Activated B cell treated with CpG ODN at 0.5 μM for 24 hours (primary cell): ENCODE measurements at regions of chr14 and their contacts with region 1.

Region 1: DNA sequence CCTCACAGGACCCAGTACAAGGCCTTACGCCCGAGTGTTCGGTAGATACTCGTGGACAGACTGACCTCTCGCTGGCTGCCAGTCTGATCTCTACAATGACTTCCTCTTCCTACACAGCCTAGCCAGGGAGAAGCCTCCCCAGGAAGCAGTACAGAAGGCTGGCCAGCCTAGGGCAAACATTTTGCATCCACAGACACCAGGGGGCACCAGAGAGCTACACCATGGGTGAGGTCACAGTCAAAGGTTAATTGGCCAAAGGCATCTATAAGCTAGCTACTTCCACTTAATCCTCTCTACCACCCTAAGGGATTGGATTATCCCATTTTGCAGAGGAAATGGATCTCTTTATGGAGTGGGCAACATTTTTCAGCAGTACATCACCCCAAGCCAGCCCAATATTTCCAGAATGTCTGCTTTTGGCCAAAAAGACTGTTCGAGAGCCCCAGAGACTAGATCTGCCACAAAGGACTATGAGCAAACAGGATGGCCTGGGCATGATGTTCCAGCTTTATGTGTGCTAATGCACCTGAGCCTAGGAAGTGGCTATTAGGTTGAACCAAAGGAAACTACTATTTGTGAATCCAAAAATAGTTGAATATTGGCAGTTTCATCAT is 14.6 kb upstream of the PNMA1 start:
- DNase-seq: peak; percentile 77
- ATAC-seq: peak; percentile 93
- H3K4me3 Mint-ChIP-seq: no peak overlapping the region
- H3K27ac Mint-ChIP-seq: peak overlapping the region; percentile 70
- H3K4me1 Mint-ChIP-seq: peaks cover 10% of the 10 kb centered on the region
- H3K27me3 Mint-ChIP-seq: no peaks in the 10 kb centered on the region
- CTCF ChIP-seq: peak; percentile 75

Region 2: GRCh38 chr14:73248108-73248868 is 480.5 kb before region 1 on chr14:
- CTCF ChIA-PET with region 1: no interaction called
- POLR2A ChIA-PET with region 1: no interaction called
- intact Hi-C with region 1: no loop called
- DNase-seq: no peak
- ATAC-seq: peak; percentile 41
- H3K4me3 Mint-ChIP-seq: peak overlapping the region; percentile 58
- H3K27ac Mint-ChIP-seq: peak overlapping the region; percentile 43
- H3K4me1 Mint-ChIP-seq: peaks cover 42% of the 10 kb centered on the region
- H3K27me3 Mint-ChIP-seq: peaks cover 1% of the 10 kb centered on the region
- CTCF ChIP-seq: no peak

Region 3: GRCh38 chr14:73386342-73386741 is 342.5 kb before region 1 on chr14:
- CTCF ChIA-PET with region 1: no interaction called
- POLR2A ChIA-PET with region 1: no interaction called
- intact Hi-C with region 1: no loop called
- DNase-seq: no peak
- ATAC-seq: no peak
- H3K4me3 Mint-ChIP-seq: no peak overlapping the region
- H3K27ac Mint-ChIP-seq: no peak overlapping the region
- H3K4me1 Mint-ChIP-seq: peaks cover 47% of the 10 kb centered on the region
- H3K27me3 Mint-ChIP-seq: no peaks in the 10 kb centered on the region
- CTCF ChIP-seq: no peak

Region 4: GRCh38 chr14:73696466-73697400 is 32.1 kb before region 1 on chr14:
- CTCF ChIA-PET with region 1: no interaction called
- POLR2A ChIA-PET with region 1: no interaction called
- intact Hi-C with region 1: no loop called
- DNase-seq: no peak
- ATAC-seq: peak; percentile 73
- H3K4me3 Mint-ChIP-seq: peak overlapping the region; percentile 6
- H3K27ac Mint-ChIP-seq: peak overlapping the region; percentile 78
- H3K4me1 Mint-ChIP-seq: peaks cover 11% of the 10 kb centered on the region
- H3K27me3 Mint-ChIP-seq: no peaks in the 10 kb centered on the region
- CTCF ChIP-seq: no peak

Region 5: DNA sequence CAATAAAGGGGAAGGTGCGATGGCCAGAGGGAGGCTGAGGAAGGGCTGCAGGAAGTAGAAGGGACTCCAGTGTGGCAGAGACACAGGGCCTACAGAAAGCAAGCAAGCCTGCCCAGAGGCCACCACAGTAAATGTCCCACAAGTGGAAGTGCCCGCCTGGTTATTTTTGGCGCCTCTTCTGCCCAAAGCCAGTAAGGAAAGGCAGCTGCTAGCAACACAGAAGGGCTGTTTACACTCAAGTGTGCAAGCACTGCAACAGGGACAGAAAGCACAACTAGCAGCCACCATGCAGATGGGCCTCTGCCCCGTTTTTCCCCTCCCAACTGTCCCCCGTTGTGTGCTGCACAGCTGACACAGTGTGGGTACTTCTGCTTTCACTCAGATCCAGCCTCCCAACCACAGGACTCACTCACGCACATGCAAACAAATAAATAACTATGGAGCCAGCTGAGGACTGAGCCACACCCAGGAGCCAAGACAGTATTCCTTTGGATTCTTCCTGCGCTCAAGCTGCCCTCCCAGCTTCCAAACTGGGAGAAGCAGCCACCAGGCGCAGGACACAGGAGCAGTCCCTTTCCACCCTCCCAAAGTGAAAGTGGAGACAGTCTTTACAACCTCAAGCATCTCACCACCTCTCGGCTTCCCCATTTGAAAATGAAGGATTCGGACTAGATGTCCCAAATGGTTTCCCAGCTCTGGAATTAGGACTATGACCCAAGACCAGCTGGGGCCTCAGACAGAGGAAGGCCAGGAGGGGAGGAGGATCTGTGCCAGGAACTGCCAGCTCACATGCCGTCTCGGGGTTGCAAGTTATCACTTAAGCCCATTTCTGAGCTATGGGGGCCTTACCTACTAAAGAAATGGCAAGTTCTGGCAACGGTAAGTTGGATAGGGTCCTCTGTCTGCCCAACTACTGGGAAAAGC is 25.4 kb after region 1 on chr14:
- CTCF ChIA-PET with region 1: interaction called, 43 read pairs
- POLR2A ChIA-PET with region 1: interaction called, 25 read pairs
- intact Hi-C with region 1: loop called (anchors 1 kb)
- DNase-seq: peak; percentile 55
- ATAC-seq: peak; percentile 52
- H3K4me3 Mint-ChIP-seq: peak overlapping the region; percentile 77
- H3K27ac Mint-ChIP-seq: peak overlapping the region; percentile 92
- H3K4me1 Mint-ChIP-seq: peaks cover 95% of the 10 kb centered on the region
- H3K27me3 Mint-ChIP-seq: no peaks in the 10 kb centered on the region
- CTCF ChIP-seq: no peak

Region 6: DNA sequence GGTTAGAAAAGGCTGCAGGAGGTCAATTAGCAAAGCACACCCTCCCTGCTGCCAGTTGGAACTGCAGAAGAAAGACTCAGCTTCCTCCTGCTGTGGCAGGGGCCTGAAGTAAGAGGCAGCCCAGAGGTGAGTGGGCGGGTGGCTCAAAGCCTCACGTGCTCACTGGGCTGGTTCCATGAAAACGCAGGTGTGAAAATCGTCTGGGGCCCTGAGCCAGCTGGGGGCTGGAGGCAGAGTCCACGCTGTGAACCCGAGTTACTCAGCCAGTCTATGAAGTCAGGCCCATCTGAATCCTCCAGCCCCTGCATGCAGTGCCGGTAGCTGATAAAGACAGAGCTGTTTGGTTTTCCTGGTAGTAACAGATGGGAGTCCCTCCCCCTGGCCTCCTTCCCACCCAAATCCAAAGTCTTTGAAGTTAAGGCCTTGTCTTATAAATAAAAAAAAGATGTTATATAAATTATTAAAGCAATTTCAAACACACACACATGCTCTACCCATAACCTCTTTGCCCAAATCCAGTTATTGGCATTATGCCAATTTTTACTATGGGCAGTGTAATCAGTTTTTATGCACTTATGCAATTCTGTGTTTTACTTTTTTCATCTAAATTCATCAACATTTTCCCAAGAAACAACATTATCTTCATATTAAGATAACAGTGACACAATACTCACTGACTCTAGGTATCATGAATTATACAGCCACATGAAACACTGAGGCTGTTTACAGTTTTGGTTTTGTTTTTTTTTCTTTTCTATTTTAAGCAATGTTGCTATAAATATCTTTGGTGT is 43.2 kb after region 1 on chr14:
- CTCF ChIA-PET with region 1: interaction called, 90 read pairs
- POLR2A ChIA-PET with region 1: interaction called, 7 read pairs
- intact Hi-C with region 1: loop called (anchors 1 kb)
- DNase-seq: peak; percentile 60
- ATAC-seq: peak; percentile 56
- H3K4me3 Mint-ChIP-seq: peak overlapping the region; percentile 74
- H3K27ac Mint-ChIP-seq: peak overlapping the region; percentile 95
- H3K4me1 Mint-ChIP-seq: peaks cover 88% of the 10 kb centered on the region
- H3K27me3 Mint-ChIP-seq: no peaks in the 10 kb centered on the region
- CTCF ChIP-seq: no peak

Region 7: DNA sequence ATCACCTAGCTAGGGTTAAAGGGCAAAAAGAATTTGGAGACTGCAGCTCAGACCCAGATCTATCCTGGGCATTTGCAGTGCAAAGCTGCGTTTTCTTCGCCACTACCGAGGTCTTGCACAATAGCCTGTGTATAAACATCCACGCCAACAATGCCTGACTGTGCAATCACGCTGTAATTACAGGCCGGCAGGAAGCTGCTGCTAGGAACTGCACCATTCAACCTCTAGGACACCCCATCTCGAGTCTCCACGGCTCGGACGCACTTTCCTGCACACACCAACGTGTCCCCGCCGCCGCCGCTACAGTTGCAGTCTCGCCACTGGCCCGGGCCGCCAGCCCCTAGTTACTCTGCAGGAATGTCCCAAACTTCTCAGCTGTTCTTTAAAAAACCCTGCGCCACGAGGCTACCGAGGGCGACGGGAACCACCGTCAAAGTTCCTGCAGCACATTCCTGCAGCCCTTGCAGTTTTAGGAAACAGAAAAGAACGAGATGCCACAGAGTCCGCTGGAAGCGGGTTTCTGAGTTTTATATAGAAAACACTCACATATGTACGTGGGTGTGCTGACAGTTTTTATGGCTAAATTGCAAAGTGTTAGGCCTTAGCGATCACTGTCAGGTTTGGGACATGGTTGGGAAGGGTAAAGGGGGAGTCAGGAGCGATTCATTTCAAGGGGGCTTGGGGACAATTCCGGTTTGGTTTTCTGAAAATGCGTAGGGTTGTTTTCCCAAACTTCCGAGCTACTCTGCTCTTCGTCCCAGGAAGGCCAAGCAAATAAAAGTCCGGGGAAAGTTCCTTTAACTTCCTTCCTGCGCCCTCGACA is 57.3 kb after region 1 on chr14:
- CTCF ChIA-PET with region 1: interaction called, 32 read pairs
- POLR2A ChIA-PET with region 1: interaction called, 20 read pairs
- intact Hi-C with region 1: loop called (anchors 2 kb)
- DNase-seq: peak; percentile 51
- ATAC-seq: peak; percentile 42
- H3K4me3 Mint-ChIP-seq: peak overlapping the region; percentile 93
- H3K27ac Mint-ChIP-seq: peak overlapping the region; percentile 89
- H3K4me1 Mint-ChIP-seq: peaks cover 59% of the 10 kb centered on the region
- H3K27me3 Mint-ChIP-seq: no peaks in the 10 kb centered on the region
- CTCF ChIP-seq: no peak

Region 8: GRCh38 chr14:73870525-73871235 is 141.9 kb after region 1 on chr14:
- CTCF ChIA-PET with region 1: no interaction called
- POLR2A ChIA-PET with region 1: no interaction called
- intact Hi-C with region 1: loop called (anchors 1 kb)
- DNase-seq: no peak
- ATAC-seq: no peak
- H3K4me3 Mint-ChIP-seq: no peak overlapping the region
- H3K27ac Mint-ChIP-seq: no peak overlapping the region
- H3K4me1 Mint-ChIP-seq: no peaks in the 10 kb centered on the region
- H3K27me3 Mint-ChIP-seq: no peaks in the 10 kb centered on the region
- CTCF ChIP-seq: no peak

Region 9: DNA sequence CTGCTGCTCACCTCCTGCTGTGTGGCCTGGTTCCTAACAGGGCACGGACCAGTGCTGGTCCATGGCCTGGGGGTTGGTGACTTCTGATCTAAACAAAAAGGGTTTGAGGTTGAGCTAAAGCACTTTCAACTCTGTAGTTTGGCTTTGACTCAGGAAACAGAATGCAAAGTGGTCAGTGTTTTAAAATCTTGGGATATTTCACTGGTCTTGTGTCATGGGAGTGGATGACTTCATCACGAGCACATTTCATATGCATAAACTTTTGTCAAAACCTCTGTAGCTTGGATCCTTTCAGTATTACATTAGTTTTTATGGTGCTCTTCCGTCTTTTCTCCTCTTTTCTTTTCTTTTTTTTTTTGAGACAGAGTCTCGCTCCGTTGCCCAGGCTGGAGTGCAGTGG is 195.5 kb after region 1 on chr14:
- CTCF ChIA-PET with region 1: no interaction called
- POLR2A ChIA-PET with region 1: no interaction called
- intact Hi-C with region 1: no loop called
- DNase-seq: no peak
- ATAC-seq: no peak
- H3K4me3 Mint-ChIP-seq: no peak overlapping the region
- H3K27ac Mint-ChIP-seq: no peak overlapping the region
- H3K4me1 Mint-ChIP-seq: no peaks in the 10 kb centered on the region
- H3K27me3 Mint-ChIP-seq: no peaks in the 10 kb centered on the region
- CTCF ChIP-seq: no peak

Region 10: GRCh38 chr14:73935666-73936065 is 206.8 kb after region 1 on chr14:
- CTCF ChIA-PET with region 1: no interaction called
- POLR2A ChIA-PET with region 1: interaction called, 10 read pairs
- intact Hi-C with region 1: no loop called
- DNase-seq: no peak
- ATAC-seq: no peak
- H3K4me3 Mint-ChIP-seq: no peak overlapping the region
- H3K27ac Mint-ChIP-seq: no peak overlapping the region
- H3K4me1 Mint-ChIP-seq: no peaks in the 10 kb centered on the region
- H3K27me3 Mint-ChIP-seq: no peaks in the 10 kb centered on the region
- CTCF ChIP-seq: no peak

Region 11: GRCh38 chr14:74038015-74038859 is 309.4 kb after region 1 on chr14:
- CTCF ChIA-PET with region 1: no interaction called
- POLR2A ChIA-PET with region 1: no interaction called
- intact Hi-C with region 1: loop called (anchors 2 kb)
- DNase-seq: no peak
- ATAC-seq: no peak
- H3K4me3 Mint-ChIP-seq: no peak overlapping the region
- H3K27ac Mint-ChIP-seq: no peak overlapping the region
- H3K4me1 Mint-ChIP-seq: no peaks in the 10 kb centered on the region
- H3K27me3 Mint-ChIP-seq: no peaks in the 10 kb centered on the region
- CTCF ChIP-seq: peak; percentile 91